PC-3 (cell line): ENCODE measurements at regions of chr5 and their contacts with region 1.

Region 1: DNA sequence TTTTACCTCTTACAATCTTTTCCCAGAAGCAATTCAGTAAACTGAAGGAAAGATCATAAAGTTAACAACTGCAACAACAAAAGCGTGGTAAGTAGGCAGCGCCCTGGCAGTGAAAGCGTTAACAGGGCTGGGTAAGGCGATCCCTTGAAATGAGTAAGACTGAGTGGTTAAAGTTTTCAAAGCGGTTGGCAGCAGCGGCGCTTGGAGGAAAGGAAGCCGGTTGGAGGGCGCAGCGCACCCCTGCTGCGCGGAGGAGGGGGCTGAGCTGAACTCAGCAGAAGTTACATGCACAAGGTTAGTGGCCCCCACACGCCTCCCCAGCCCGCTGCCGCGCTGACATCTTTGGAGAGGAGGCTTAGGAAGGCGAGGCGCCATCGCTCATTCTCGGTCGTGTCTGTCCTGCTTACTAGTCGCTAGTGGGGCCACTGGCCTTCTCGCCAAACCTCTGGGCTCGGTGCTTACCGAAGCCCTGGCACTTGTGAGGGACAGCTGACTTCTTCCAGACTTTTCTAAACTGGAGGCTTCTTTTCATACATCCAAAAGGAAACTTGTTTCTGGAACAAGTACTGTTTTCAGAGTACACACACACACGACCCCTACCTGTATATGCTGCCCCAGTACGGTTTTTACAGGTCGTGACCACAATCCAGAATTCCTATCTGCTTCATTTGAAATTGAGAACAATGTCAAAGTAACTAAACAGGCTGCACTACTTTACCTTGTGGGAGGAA is at the start of gene SH3RF2:
- DNase-seq: peak; percentile 75
- ATAC-seq: peak; percentile 79
- H3K4me3 ChIP-seq: peak within 1 kb of the TSS; percentile 86
- H3K27ac ChIP-seq: peak within 1 kb of the TSS; percentile 70
- H3K4me1 ChIP-seq: peaks cover 40% of the 10 kb centered on the region
- H3K27me3 ChIP-seq: no peaks in the 10 kb centered on the region
- CTCF ChIP-seq: no peak
- total RNA-seq, gene SH3RF2: 5.9 and 6.2 TPM in 2 replicates

Region 2: GRCh38 chr5:145989428-145989827 is 52.9 kb after region 1 on chr5:
- CTCF ChIA-PET with region 1: no interaction called
- POLR2A ChIA-PET with region 1: no interaction called
- intact Hi-C with region 1: no loop called
- DNase-seq: no peak
- ATAC-seq: no peak
- H3K4me3 ChIP-seq: no peak overlapping the region
- H3K27ac ChIP-seq: no peak overlapping the region
- H3K4me1 ChIP-seq: no peaks in the 10 kb centered on the region
- H3K27me3 ChIP-seq: no peaks in the 10 kb centered on the region
- CTCF ChIP-seq: no peak

Region 3: DNA sequence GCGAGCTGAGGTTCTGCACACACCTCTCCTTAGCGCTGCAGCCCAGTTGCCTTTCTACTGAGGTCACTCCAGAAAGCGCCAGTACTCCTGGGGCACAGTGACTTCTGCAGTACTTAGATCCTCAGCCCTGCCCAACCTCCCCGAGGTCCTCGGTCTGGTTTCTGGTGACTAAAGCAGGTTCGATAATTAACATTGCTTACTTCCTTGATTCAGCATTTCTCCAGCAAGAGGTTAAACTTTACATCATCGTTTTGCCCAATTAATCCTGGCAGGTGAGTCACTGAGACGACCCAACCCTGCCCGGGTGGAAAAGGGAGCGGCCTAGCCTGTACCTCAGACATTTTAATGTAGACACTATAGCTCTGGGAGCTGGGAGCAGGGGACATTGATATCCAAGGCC is 91.2 kb after region 1 on chr5:
- CTCF ChIA-PET with region 1: no interaction called
- POLR2A ChIA-PET with region 1: no interaction called
- intact Hi-C with region 1: loop called (anchors 5 kb)
- DNase-seq: peak; percentile 96
- ATAC-seq: peak; percentile 99
- H3K4me3 ChIP-seq: 0 out of 2 replicates have a peak overlapping the region, but pooled peaks have one; percentile 2
- H3K27ac ChIP-seq: peak overlapping the region; percentile 59
- H3K4me1 ChIP-seq: peaks cover 21% of the 10 kb centered on the region
- H3K27me3 ChIP-seq: no peaks in the 10 kb centered on the region
- CTCF ChIP-seq: no peak